ENCODE measurements at regions of chr10 and their contacts with region 1.

Region 1: GRCh38 chr10:93482145-93482834 is at the start of gene MYOF:
- DNase-seq: peak; percentile 65
- H3K4me3 Mint-ChIP-seq: peak within 1 kb of the TSS; percentile 88
- H3K27ac Mint-ChIP-seq: peak within 1 kb of the TSS; percentile 88
- H3K4me1 Mint-ChIP-seq: peaks cover 23% of the 10 kb centered on the region
- H3K27me3 Mint-ChIP-seq: peaks cover 3% of the 10 kb centered on the region
- total RNA-seq, gene MYOF: 49.3 to 49.7 TPM

Region 2: DNA sequence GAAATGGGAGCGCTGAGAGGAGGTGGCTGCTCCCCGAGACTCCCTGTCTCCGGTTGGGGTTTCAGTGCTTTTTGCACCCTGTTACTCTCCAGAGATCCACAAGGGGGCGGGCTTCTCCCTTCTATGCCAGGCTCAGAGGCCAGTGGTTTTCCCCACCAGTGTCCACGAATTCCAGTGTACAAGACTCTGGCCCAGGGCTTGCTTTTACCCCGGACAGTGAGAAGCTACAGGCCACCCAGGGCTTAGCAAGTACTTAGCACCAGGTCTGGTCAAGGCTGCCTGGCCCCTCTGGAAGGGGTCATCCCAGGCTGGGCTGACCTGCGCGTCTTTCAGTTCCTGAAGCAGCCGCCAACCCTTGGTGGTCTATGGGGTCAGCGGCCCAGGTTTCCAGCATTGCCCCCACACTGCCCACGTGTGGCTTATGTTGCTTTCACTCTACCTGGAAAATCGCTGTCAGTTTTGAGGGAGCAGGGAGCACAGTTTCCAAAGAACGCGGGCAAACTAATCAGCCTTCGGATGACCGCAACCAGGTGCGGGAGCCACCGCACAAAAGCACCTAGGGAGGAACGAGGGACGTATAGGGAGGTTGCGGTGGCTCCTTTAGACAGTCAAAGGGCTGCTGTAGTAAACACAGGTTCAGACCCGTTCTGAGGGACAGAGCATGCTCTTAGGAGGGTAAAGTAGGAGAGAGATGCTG is 401.8 kb before region 1 on chr10:
- CTCF ChIA-PET with region 1: interaction called, 5 read pairs
- POLR2A ChIA-PET with region 1: no interaction called
- intact Hi-C with region 1: loop called (anchors 2 kb)
- DNase-seq: peak; percentile 68
- H3K4me3 Mint-ChIP-seq: no peak overlapping the region
- H3K27ac Mint-ChIP-seq: no peak overlapping the region
- H3K4me1 Mint-ChIP-seq: peaks cover 7% of the 10 kb centered on the region
- H3K27me3 Mint-ChIP-seq: peaks cover 40% of the 10 kb centered on the region

Region 3: GRCh38 chr10:93352638-93353383 is 129.5 kb before region 1 on chr10:
- CTCF ChIA-PET with region 1: interaction called, 31 read pairs
- POLR2A ChIA-PET with region 1: interaction called, 3 read pairs
- intact Hi-C with region 1: no loop called
- DNase-seq: no peak
- H3K4me3 Mint-ChIP-seq: no peak overlapping the region
- H3K27ac Mint-ChIP-seq: no peak overlapping the region
- H3K4me1 Mint-ChIP-seq: peaks cover 3% of the 10 kb centered on the region
- H3K27me3 Mint-ChIP-seq: peaks cover 11% of the 10 kb centered on the region

Region 4: GRCh38 chr10:93376372-93377293 is 105.7 kb before region 1 on chr10:
- CTCF ChIA-PET with region 1: interaction called, 422 read pairs
- POLR2A ChIA-PET with region 1: interaction called, 59 read pairs
- intact Hi-C with region 1: loop called (anchors 1 kb)
- DNase-seq: peak; percentile 34
- H3K4me3 Mint-ChIP-seq: no peak overlapping the region
- H3K27ac Mint-ChIP-seq: peak overlapping the region; percentile 34
- H3K4me1 Mint-ChIP-seq: peaks cover 41% of the 10 kb centered on the region
- H3K27me3 Mint-ChIP-seq: no peaks in the 10 kb centered on the region

Region 5: GRCh38 chr10:93413252-93413689 is 69.0 kb before region 1 on chr10:
- CTCF ChIA-PET with region 1: interaction called, 7 read pairs
- POLR2A ChIA-PET with region 1: interaction called, 4 read pairs
- intact Hi-C with region 1: loop called (anchors 1 kb)
- DNase-seq: peak; percentile 56
- H3K4me3 Mint-ChIP-seq: no peak overlapping the region
- H3K27ac Mint-ChIP-seq: peak overlapping the region; percentile 57
- H3K4me1 Mint-ChIP-seq: peaks cover 58% of the 10 kb centered on the region
- H3K27me3 Mint-ChIP-seq: no peaks in the 10 kb centered on the region

Region 6: GRCh38 chr10:93471110-93471651 is 11.1 kb before region 1 on chr10:
- CTCF ChIA-PET with region 1: interaction called, 52 read pairs
- POLR2A ChIA-PET with region 1: interaction called, 9 read pairs
- intact Hi-C with region 1: loop called (anchors 1 kb)
- DNase-seq: no peak
- H3K4me3 Mint-ChIP-seq: no peak overlapping the region
- H3K27ac Mint-ChIP-seq: no peak overlapping the region
- H3K4me1 Mint-ChIP-seq: peaks cover 19% of the 10 kb centered on the region
- H3K27me3 Mint-ChIP-seq: no peaks in the 10 kb centered on the region

Region 7: GRCh38 chr10:93503075-93503474 is 20.8 kb after region 1 on chr10:
- CTCF ChIA-PET with region 1: interaction called, 84 read pairs
- POLR2A ChIA-PET with region 1: interaction called, 7 read pairs
- intact Hi-C with region 1: no loop called
- DNase-seq: no peak
- H3K4me3 Mint-ChIP-seq: peak overlapping the region; percentile 36
- H3K27ac Mint-ChIP-seq: peak overlapping the region; percentile 50
- H3K4me1 Mint-ChIP-seq: peaks cover 51% of the 10 kb centered on the region
- H3K27me3 Mint-ChIP-seq: no peaks in the 10 kb centered on the region

Region 8: GRCh38 chr10:93639791-93640190 is 157.5 kb after region 1 on chr10:
- CTCF ChIA-PET with region 1: no interaction called
- POLR2A ChIA-PET with region 1: no interaction called
- intact Hi-C with region 1: no loop called
- DNase-seq: no peak
- H3K4me3 Mint-ChIP-seq: no peak overlapping the region
- H3K27ac Mint-ChIP-seq: no peak overlapping the region
- H3K4me1 Mint-ChIP-seq: no peaks in the 10 kb centered on the region
- H3K27me3 Mint-ChIP-seq: peaks cover 2% of the 10 kb centered on the region

Region 9: DNA sequence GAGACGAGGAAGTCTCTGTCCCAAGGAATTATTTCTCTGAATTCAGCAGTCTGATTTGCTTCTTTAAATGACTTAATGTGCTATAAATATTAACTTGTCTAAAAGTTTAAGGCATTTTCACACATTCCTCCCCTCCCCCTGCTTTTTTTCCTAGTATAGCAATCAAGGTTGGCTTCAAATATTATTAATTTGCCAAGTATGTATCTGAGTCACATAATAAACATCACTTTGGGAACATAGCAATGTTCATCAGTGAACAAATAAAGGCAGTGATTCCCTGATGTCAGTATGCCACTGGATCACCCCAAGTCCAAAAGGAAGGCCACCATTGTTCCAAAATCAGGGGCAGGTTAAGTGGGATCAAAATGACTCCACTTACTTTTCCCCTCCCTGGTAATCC is 170.6 kb after region 1 on chr10:
- CTCF ChIA-PET with region 1: no interaction called
- POLR2A ChIA-PET with region 1: no interaction called
- intact Hi-C with region 1: no loop called
- DNase-seq: no peak
- H3K4me3 Mint-ChIP-seq: no peak overlapping the region
- H3K27ac Mint-ChIP-seq: no peak overlapping the region
- H3K4me1 Mint-ChIP-seq: no peaks in the 10 kb centered on the region
- H3K27me3 Mint-ChIP-seq: no peaks in the 10 kb centered on the region

Measured in activated CD4-positive, alpha-beta memory T cell treated with anti-CD3 and anti-CD28 coated beads for 36 hours (primary cell).